HCT116 (cell line): ENCODE measurements at regions of chr11 and their contacts with region 1.

Region 1: GRCh38 chr11:82900277-82901164 is at the start of gene PRCP:
- DNase-seq: peak; percentile 82
- ATAC-seq: peak; percentile 89
- H3K4me3 ChIP-seq: peak within 1 kb of the TSS; percentile 55 to 96
- H3K27ac ChIP-seq: peak within 1 kb of the TSS; percentile 69
- H3K4me1 ChIP-seq: peaks cover 10 to 24% of the 10 kb centered on the region in 2 experiments; a peak in 3 of 4 replicates
- H3K27me3 ChIP-seq: no peaks in the 10 kb centered on the region
- CTCF ChIP-seq: 0 out of 6 replicates have a peak, but pooled peaks of 1 of the 3 experiments have one; percentile 2
- POLR2A ChIP-seq: peak; percentile 59
- RAD21 ChIP-seq: no peak
- total RNA-seq, gene PRCP: 50.0 TPM

Region 2: DNA sequence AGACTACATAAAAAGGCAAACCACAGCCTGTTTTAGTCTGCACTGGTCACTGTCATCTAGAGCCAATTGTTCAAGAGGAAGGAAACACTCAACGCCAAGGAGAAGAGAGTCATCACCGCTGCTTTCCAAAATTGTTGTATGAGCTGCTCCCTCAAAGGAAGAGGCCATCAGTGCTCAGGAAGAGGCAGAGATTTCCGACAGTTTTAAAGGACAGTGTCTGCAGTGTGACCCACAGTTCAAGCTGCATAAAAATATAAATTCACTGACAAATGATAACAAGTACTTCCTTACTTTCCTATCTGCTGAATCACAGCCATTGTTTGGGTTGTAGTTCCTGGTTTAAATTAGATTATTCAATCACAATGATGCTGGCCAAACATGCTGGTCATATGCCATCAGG is 16.7 kb before region 1 on chr11:
- CTCF ChIA-PET with region 1: no interaction called
- POLR2A ChIA-PET with region 1: no interaction called
- RAD21 ChIA-PET with region 1: no interaction called
- intact Hi-C with region 1: no loop called
- DNase-seq: no peak
- ATAC-seq: no peak
- H3K4me3 ChIP-seq: no peak overlapping the region
- H3K27ac ChIP-seq: no peak overlapping the region
- H3K4me1 ChIP-seq: no peaks in the 10 kb centered on the region
- H3K27me3 ChIP-seq: no peaks in the 10 kb centered on the region
- CTCF ChIP-seq: no peak
- POLR2A ChIP-seq: no peak
- RAD21 ChIP-seq: no peak

Region 3: DNA sequence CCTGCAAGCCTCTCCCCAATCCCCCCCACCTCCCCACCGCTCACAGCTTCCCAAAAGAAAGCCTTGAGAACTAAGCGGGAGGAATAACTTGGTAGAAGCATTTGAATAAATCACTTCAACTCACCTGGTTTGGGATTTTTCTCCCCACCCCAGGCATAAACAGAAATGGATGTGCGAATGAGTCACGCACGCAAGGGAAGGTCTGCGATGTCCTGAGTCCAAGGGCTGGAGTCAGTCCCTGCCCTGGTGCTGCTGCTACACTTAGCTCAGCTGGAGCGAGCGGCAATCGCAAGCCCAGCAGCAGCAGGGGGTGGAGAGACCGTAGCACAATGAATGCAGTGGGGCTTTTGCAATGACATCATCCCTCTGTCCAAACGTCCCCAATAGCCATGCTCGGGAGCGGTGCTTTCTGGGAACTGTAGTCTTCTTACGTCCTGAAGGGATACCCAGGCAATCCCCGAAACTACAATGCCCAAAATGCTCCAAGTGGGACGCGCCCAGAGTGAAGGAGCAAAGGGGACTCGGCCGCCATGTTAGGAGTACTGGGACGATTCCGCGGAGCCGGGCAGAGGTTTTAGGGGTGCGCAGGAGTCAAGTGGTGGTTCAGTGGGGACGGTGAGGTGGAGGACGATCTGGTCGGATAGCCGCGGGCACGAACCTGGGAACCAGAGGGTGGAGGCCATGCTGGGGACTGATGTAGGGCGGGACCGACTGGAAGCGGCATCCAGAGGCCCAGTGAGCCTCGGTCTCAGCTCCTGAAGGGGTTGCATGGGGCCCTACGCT is 171.2 kb after region 1 on chr11 and contains the start of gene RAB30:
- CTCF ChIA-PET with region 1: no interaction called
- POLR2A ChIA-PET with region 1: no interaction called
- RAD21 ChIA-PET with region 1: no interaction called
- intact Hi-C with region 1: loop called (anchors 1 kb)
- DNase-seq: peak; percentile 99
- ATAC-seq: peak; percentile 95
- H3K4me3 ChIP-seq: peak within 1 kb of the TSS; percentile 90 to 95
- H3K27ac ChIP-seq: peak within 1 kb of the TSS; percentile 77
- H3K4me1 ChIP-seq: peaks cover 11 to 27% of the 10 kb centered on the region in 2 experiments
- H3K27me3 ChIP-seq: no peaks in the 10 kb centered on the region
- CTCF ChIP-seq: no peak
- POLR2A ChIP-seq: peak; percentile 45
- RAD21 ChIP-seq: no peak; the same call in 1 of the 2 replicates
- total RNA-seq, gene RAB30: 5.7 TPM